ENCODE measurements at regions of chr1 and their contacts with region 1.

Region 1: GRCh38 chr1:111801071-111801841 is 45.6 kb downstream of the DDX20 start:
- DNase-seq: peak; percentile 80

Region 2: GRCh38 chr1:111843177-111843576 is 41.9 kb after region 1 on chr1:
- intact Hi-C with region 1: loop called (anchors 5 kb)
- DNase-seq: peak; percentile 43